ENCODE measurements at regions of chr4 and their contacts with region 1.

Region 1: DNA sequence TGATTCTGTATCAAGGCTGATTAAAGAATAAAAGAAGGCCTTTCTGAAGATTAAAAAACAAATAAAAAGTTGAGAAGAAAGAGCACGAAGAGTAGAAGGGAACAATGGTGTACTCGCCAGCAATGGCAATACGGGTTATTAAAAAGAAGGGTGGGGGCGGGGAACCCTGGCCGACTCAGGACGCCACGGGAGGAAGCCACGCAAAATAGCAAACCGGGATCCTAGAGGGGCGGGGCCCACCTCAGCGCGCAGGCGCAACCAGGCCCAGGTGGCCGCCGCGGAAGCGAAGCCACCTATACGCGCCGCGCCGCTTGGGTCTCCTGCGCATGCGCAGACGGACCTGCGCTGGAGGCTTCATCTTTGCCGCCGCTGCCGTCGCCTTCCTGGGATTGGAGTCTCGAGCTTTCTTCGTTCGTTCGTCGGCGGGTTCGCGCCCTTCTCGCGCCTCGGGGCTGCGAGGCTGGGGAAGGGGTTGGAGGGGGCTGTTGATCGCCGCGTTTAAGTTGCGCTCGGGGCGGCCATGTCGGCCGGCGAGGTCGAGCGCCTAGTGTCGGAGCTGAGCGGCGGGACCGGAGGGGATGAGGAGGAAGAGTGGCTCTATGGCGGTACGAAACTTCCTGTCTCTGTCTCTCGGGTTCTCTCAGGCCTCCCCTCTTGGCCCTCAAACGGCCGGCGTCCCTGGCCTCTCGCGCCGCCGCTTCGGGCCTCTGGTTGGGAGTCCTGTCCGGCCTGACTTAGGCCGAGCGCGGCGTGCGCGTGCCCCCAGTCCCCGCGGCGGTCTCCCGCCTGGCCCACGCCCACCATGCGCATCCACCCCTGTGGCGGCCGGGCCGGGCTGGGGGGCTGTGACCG is at the start of gene FIP1L1:
- DNase-seq: peak; percentile 94
- H3K4me3 Mint-ChIP-seq: peak within 1 kb of the TSS; percentile 97
- H3K27ac Mint-ChIP-seq: peak within 1 kb of the TSS; percentile 92
- H3K4me1 Mint-ChIP-seq: peaks cover 25% of the 10 kb centered on the region
- H3K27me3 Mint-ChIP-seq: peaks cover 5% of the 10 kb centered on the region
- total RNA-seq, gene FIP1L1: 95.0 and 99.2 TPM in 2 replicates

Region 2: GRCh38 chr4:51842554-51843308 is 1534.8 kb before region 1 on chr4 and contains the start of gene DCUN1D4:
- intact Hi-C with region 1: loop called (anchors 5 kb)
- DNase-seq: peak; percentile 98
- H3K4me3 Mint-ChIP-seq: peak within 1 kb of the TSS; percentile 91
- H3K27ac Mint-ChIP-seq: peak within 1 kb of the TSS; percentile 96
- H3K4me1 Mint-ChIP-seq: peaks cover 16% of the 10 kb centered on the region
- H3K27me3 Mint-ChIP-seq: no peaks in the 10 kb centered on the region
- total RNA-seq, gene DCUN1D4: 31.5 and 32.6 TPM in 2 replicates

Region 3: DNA sequence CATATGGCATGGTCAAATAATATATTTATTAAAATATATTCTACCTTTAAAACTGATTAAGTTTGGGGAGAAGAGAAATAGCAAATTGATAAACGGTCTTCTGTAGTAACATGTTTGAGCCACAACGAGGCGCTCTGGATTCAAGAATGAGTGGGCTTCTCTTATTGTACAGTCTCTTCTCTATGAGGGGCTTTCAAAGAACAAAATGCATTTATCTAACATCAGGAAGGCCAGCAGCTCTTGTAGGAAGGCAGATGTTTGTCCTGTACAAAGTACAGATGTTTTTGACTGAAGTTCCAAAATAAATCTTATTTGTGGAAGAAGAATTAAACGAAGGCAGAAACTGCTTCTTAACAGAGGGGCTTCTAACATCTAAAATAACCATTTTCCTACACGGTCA is 361.9 kb before region 1 on chr4:
- intact Hi-C with region 1: loop called (anchors 10 kb)
- DNase-seq: no peak
- H3K4me3 Mint-ChIP-seq: no peak overlapping the region
- H3K27ac Mint-ChIP-seq: no peak overlapping the region
- H3K4me1 Mint-ChIP-seq: peaks cover 28% of the 10 kb centered on the region
- H3K27me3 Mint-ChIP-seq: no peaks in the 10 kb centered on the region

Region 4: GRCh38 chr4:53196882-53197771 is 180.4 kb before region 1 on chr4:
- intact Hi-C with region 1: loop called (anchors 5 kb)
- DNase-seq: no peak
- H3K4me3 Mint-ChIP-seq: no peak overlapping the region
- H3K27ac Mint-ChIP-seq: no peak overlapping the region
- H3K4me1 Mint-ChIP-seq: no peaks in the 10 kb centered on the region
- H3K27me3 Mint-ChIP-seq: no peaks in the 10 kb centered on the region

Region 5: DNA sequence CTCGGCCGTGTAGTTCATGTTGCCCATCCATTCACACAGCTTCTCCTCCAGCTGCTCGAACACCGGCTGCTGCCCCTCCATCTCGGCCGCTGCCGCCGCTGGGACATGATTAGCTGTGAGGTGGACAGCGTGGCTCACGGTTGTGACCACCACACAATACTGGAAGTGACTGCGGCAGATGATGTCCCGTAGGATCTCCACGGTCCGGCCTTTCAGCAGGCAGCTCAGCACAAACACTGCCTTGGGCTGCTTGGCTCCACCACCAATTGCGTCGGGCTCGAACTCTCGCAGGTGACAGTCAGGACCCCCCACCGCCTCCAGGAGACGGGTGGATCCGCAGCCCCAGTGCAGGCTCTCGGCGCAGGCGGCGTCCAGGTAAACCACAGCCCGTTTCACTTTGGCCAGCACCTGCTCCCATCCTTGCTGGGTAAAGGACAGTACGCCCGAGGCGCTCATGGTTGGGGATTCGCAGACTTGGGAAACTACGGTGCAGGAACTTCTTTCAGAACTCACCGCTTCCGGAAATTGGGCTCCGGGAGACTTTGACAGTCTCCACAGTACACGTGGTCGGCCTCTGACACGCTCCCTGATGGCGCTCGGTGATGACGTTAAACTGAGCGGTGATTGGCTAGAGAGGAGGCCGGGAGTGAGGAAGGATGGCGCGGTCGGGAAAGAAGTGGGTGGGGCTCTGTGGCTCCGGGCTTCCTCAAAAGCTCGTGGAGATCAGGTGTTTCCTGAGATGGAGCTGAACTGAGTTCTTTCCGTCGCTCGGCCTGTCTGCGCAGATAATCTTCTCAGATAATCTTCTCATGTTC is 11.9 kb before region 1 on chr4 and contains the start of gene SCFD2:
- intact Hi-C with region 1: loop called (anchors 1 kb)
- DNase-seq: peak; percentile 94
- H3K4me3 Mint-ChIP-seq: peak within 1 kb of the TSS; percentile 95
- H3K27ac Mint-ChIP-seq: peak within 1 kb of the TSS; percentile 94
- H3K4me1 Mint-ChIP-seq: peaks cover 37% of the 10 kb centered on the region
- H3K27me3 Mint-ChIP-seq: peaks cover 17% of the 10 kb centered on the region
- total RNA-seq, gene SCFD2: 26.3 and 31.7 TPM in 2 replicates

Region 6: GRCh38 chr4:53432528-53433424 is 55.2 kb after region 1 on chr4:
- intact Hi-C with region 1: loop called (anchors 5 kb)
- DNase-seq: no peak
- H3K4me3 Mint-ChIP-seq: no peak overlapping the region
- H3K27ac Mint-ChIP-seq: peak overlapping the region; percentile 42
- H3K4me1 Mint-ChIP-seq: peaks cover 21% of the 10 kb centered on the region
- H3K27me3 Mint-ChIP-seq: no peaks in the 10 kb centered on the region

Region 7: GRCh38 chr4:54233277-54233696 is 855.7 kb after region 1 on chr4:
- intact Hi-C with region 1: loop called (anchors 10 kb)
- DNase-seq: peak; percentile 64
- H3K4me3 Mint-ChIP-seq: peak overlapping the region; percentile 41
- H3K27ac Mint-ChIP-seq: no peak overlapping the region
- H3K4me1 Mint-ChIP-seq: peaks cover 19% of the 10 kb centered on the region
- H3K27me3 Mint-ChIP-seq: peaks cover 55% of the 10 kb centered on the region